ENCODE measurements at regions of chr12 and their contacts with region 1.

Region 1: DNA sequence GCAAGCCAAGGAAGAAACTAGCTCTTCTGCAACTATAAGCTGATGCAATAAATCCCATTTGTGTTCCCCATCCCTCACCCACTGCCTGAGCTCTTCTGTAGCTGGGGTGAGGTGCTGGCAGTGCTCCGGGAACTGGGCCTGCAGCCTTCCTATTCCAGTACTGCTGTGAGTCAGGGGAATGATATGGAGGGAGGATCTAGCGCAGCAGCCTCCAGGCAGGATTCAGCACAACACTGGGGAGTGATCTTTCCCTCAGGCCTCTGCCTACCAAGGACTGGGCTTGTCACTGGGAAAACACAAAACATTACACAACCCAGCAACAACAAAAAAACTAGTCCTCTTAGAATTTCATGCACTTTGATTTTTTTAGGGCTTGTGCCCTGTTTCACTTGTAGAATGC is 58.7 kb downstream of the ST8SIA1 start:
- DNase-seq: peak; percentile 58
- H3K4me3 ChIP-seq: no peak overlapping the region
- H3K27ac ChIP-seq: no peak overlapping the region
- H3K4me1 ChIP-seq: peaks cover 9% of the 10 kb centered on the region
- H3K27me3 ChIP-seq: no peaks in the 10 kb centered on the region
- CTCF ChIP-seq: no peak
- POLR2A ChIP-seq: no peak

Region 2: GRCh38 chr12:22287776-22288621 is 12.2 kb after region 1 on chr12:
- CTCF ChIA-PET with region 1: interaction called, 15 read pairs
- POLR2A ChIA-PET with region 1: no interaction called
- dilution Hi-C with region 1: no loop called
- intact Hi-C with region 1: no loop called
- DNase-seq: peak; percentile 60
- H3K4me3 ChIP-seq: no peak overlapping the region
- H3K27ac ChIP-seq: no peak overlapping the region
- H3K4me1 ChIP-seq: peaks cover 21% of the 10 kb centered on the region
- H3K27me3 ChIP-seq: no peaks in the 10 kb centered on the region
- CTCF ChIP-seq: no peak
- POLR2A ChIP-seq: no peak

Region 3: DNA sequence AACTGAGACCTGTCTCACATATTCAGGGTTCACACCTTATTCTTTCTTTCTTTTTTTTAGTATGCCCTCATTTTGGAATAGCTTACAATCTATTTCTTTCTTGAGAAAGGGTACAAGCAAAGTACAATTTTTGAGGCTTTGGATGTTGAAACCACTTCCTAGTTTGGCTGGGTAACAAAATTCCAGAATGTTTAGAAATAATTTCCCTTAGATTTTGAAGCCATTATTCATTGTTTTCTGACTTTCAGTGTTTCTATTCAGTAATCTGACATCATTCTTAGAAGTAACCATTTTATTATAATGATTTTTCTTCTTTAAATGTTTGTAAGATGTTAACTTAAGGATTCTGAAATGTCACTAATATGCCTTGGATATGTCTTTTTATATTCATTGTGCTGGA is 30.5 kb after region 1 on chr12:
- CTCF ChIA-PET with region 1: no interaction called
- POLR2A ChIA-PET with region 1: no interaction called
- dilution Hi-C with region 1: no loop called
- intact Hi-C with region 1: no loop called
- DNase-seq: no peak
- H3K4me3 ChIP-seq: no peak overlapping the region
- H3K27ac ChIP-seq: no peak overlapping the region
- H3K4me1 ChIP-seq: no peaks in the 10 kb centered on the region
- H3K27me3 ChIP-seq: peaks cover 5 to 8% of the 10 kb centered on the region in 2 experiments
- CTCF ChIP-seq: no peak
- POLR2A ChIP-seq: no peak